Activated B cell treated with CpG ODN at 0.5 μM for 24 hours (primary cell): ENCODE measurements at regions of chr11 and their contacts with region 1.

Region 1: GRCh38 chr11:207208-207862 is at the starts of genes BET1L and RIC8A:
- DNase-seq: peak; percentile 95
- ATAC-seq: peak; percentile 82
- H3K4me3 Mint-ChIP-seq: peak within 1 kb of the TSS; percentile 97
- H3K27ac Mint-ChIP-seq: peak within 1 kb of the TSS; percentile 99
- H3K4me1 Mint-ChIP-seq: peaks cover 46% of the 10 kb centered on the region
- H3K27me3 Mint-ChIP-seq: no peaks in the 10 kb centered on the region
- CTCF ChIP-seq: no peak
- total RNA-seq, gene BET1L: 44.2 and 47.0 TPM in 2 replicates
- total RNA-seq, gene RIC8A: 108 and 114 TPM in 2 replicates

Region 2: DNA sequence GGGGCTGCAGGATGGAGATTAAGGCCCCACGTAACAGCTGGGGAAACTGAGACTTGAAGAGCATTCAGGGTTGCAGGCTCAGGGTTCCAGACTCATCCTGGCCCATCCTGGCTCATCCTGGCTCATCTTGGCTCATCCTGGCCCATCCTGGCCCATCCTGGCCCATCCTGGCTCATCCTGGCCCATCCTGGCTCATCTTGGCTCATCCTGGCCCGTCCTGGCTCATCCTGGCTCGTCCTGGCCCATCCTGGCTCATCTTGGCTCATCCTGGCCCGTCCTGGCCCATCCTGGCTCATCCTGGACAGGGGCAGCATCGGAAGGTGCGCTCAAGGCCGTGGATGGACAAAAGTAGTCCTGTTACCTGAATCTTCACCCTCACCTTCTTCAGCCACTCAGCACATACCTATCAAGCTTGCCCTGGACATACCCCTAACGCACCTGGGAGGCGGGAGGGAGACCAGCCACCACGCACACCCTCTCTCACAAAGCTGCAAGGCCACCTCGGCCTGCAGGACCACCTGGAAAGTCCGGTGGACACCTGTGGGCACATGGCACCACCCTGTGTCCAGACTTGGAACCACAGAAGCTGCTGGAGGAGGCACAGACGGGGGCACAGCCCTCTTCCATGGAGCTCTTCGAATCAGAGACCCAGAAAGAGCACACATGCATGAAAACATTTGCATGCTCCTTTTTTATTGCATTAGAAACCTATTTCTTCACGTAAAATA is 50.6 kb after region 1 on chr11:
- CTCF ChIA-PET with region 1: no interaction called
- POLR2A ChIA-PET with region 1: interaction called, 11 read pairs
- intact Hi-C with region 1: no loop called
- DNase-seq: no peak
- ATAC-seq: no peak
- H3K4me3 Mint-ChIP-seq: no peak overlapping the region
- H3K27ac Mint-ChIP-seq: peak overlapping the region; percentile 61
- H3K4me1 Mint-ChIP-seq: peaks cover 33% of the 10 kb centered on the region
- H3K27me3 Mint-ChIP-seq: no peaks in the 10 kb centered on the region
- CTCF ChIP-seq: no peak

Region 3: DNA sequence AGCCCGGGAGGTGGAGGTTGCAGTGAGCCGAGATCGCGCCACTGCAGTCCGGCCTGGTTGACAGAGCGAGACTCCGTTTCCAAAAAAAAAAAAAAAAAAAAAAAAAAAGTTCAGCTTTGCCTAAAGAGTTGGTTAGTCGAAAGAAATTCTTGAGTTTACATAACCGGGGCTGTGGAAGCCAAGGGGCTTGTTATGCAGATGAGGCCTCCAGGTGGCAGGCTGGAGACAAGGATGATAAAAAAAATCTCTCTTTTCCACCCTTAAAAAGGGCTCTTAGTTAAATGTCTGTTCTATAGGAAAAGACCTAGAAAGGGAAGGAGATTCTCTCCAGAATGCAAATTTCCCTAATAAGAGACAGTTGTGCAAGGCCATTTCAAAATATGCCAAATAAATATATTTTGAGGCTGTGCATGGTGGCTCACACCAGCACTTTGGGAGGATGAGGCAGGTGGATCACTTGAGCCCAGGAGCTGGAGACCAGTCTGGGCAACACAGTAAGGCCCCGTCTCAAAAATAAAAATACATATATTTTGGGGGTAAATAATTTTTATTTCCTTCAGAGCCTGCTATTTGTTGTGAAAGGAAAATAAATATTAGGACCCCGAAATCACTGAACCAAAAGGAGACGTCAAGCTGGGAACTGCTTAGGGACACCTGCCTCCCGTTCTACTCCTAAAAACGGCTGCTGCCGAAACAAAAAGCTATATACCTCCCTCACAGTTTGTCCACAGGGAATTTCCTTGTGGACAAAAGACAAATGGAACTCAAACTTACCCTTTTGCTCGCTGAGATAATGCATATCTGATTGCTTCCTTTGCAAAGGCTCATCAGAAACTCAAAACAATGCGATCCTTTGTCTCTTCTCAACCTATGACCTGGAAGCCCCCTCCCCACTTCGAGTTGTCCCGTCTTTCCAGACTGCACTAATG is 97.8 kb after region 1 on chr11:
- CTCF ChIA-PET with region 1: no interaction called
- POLR2A ChIA-PET with region 1: interaction called, 15 read pairs
- intact Hi-C with region 1: loop called (anchors 2 kb)
- DNase-seq: no peak
- ATAC-seq: peak; percentile 28
- H3K4me3 Mint-ChIP-seq: no peak overlapping the region
- H3K27ac Mint-ChIP-seq: peak overlapping the region; percentile 35
- H3K4me1 Mint-ChIP-seq: peaks cover 55% of the 10 kb centered on the region
- H3K27me3 Mint-ChIP-seq: no peaks in the 10 kb centered on the region
- CTCF ChIP-seq: no peak

Region 4: GRCh38 chr11:406978-407739 is 199.8 kb after region 1 on chr11:
- CTCF ChIA-PET with region 1: no interaction called
- POLR2A ChIA-PET with region 1: interaction called, 18 read pairs
- intact Hi-C with region 1: loop called (anchors 1 kb)
- DNase-seq: peak; percentile 76
- ATAC-seq: peak; percentile 85
- H3K4me3 Mint-ChIP-seq: peak overlapping the region; percentile 60
- H3K27ac Mint-ChIP-seq: peak overlapping the region; percentile 35
- H3K4me1 Mint-ChIP-seq: peaks cover 3% of the 10 kb centered on the region
- H3K27me3 Mint-ChIP-seq: no peaks in the 10 kb centered on the region
- CTCF ChIP-seq: no peak

Region 5: DNA sequence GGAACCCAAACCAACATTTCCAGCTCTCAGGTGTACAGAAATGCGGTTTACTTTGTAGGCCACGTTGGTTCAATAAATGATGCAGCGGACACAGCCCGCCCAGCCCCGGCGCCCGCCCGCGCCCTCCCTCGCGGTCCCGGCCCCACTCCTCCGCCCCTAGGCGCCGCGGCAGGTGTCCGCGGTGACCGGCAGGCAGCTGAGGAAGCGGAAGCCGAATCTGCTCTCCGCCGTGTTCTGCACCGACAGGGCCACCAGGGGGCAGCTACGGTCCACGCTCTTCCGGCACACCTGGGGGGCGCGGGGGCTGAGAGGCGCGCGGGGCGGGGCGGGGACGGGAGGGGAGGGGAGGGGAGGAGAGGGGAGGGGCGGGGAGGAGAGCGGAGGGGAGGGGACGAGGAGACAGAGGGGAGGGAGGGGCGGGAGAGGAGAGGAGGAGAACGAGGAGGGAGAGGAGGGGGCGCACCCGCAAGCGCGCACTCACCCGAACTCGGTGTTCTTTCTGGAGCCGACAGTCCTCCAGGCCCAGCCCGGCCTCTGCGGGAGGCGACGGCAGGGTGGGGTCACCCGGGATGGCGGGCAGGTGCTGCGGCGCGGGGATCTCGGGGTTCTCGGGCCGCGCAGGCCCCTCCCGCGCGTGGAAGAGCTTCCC is 347.6 kb after region 1 on chr11:
- CTCF ChIA-PET with region 1: no interaction called
- POLR2A ChIA-PET with region 1: interaction called, 11 read pairs
- intact Hi-C with region 1: no loop called
- DNase-seq: peak; percentile 70
- ATAC-seq: peak; percentile 93
- H3K4me3 Mint-ChIP-seq: peak overlapping the region; percentile 24
- H3K27ac Mint-ChIP-seq: no peak overlapping the region
- H3K4me1 Mint-ChIP-seq: peaks cover 6% of the 10 kb centered on the region
- H3K27me3 Mint-ChIP-seq: no peaks in the 10 kb centered on the region
- CTCF ChIP-seq: no peak